ENCODE measurements at regions of chr18 and their contacts with region 1.

Region 1: GRCh38 chr18:54043484-54044251 is 180.8 kb downstream of the MBD2 start:
- DNase-seq: no peak
- H3K4me3 ChIP-seq: no peak overlapping the region
- H3K27ac ChIP-seq: no peak overlapping the region
- H3K4me1 ChIP-seq: no peaks in the 10 kb centered on the region
- H3K27me3 ChIP-seq: no peaks in the 10 kb centered on the region
- CTCF ChIP-seq: no peak

Region 2: GRCh38 chr18:53698907-53699306 is 344.8 kb before region 1 on chr18:
- CTCF ChIA-PET with region 1: no interaction called
- POLR2A ChIA-PET with region 1: no interaction called
- intact Hi-C with region 1: loop called (anchors 5 kb)
- DNase-seq: peak in 1 of 2 experiments; percentile 3
- H3K4me3 ChIP-seq: no peak overlapping the region
- H3K27ac ChIP-seq: no peak overlapping the region
- H3K4me1 ChIP-seq: no peaks in the 10 kb centered on the region
- H3K27me3 ChIP-seq: no peaks in the 10 kb centered on the region; the same call in 1 of the 2 replicates
- CTCF ChIP-seq: peak; percentile 56

Region 3: GRCh38 chr18:55307505-55307904 is 1263.8 kb after region 1 on chr18:
- CTCF ChIA-PET with region 1: no interaction called
- POLR2A ChIA-PET with region 1: no interaction called
- intact Hi-C with region 1: no loop called
- DNase-seq: no peak
- H3K4me3 ChIP-seq: no peak overlapping the region
- H3K27ac ChIP-seq: no peak overlapping the region
- H3K4me1 ChIP-seq: no peaks in the 10 kb centered on the region
- H3K27me3 ChIP-seq: no peaks in the 10 kb centered on the region
- CTCF ChIP-seq: no peak